ENCODE measurements at regions of chr2 and their contacts with region 1.

Region 1: GRCh38 chr2:171922230-171923022 is at the start of gene HAT1:
- DNase-seq: peak; percentile 97
- H3K4me3 ChIP-seq: peak within 1 kb of the TSS; percentile 79 to 81
- H3K27ac ChIP-seq: peak within 1 kb of the TSS; percentile 95 to 98
- H3K4me1 ChIP-seq: no peaks in the 10 kb centered on the region
- H3K27me3 ChIP-seq: no peaks in the 10 kb centered on the region
- CTCF ChIP-seq: no peak
- POLR2A ChIP-seq: peak; percentile 61
- total RNA-seq, gene HAT1: 30.6 to 41.9 TPM

Region 2: GRCh38 chr2:171893824-171894611 is 28.4 kb before region 1 on chr2 and contains the start of gene SLC25A12:
- intact Hi-C with region 1: loop called (anchors 1 kb)
- DNase-seq: peak; percentile 79
- H3K4me3 ChIP-seq: peak within 1 kb of the TSS; percentile 65 to 79
- H3K27ac ChIP-seq: peak within 1 kb of the TSS; percentile 85 to 88
- H3K4me1 ChIP-seq: no peaks in the 10 kb centered on the region
- H3K27me3 ChIP-seq: no peaks in the 10 kb centered on the region
- CTCF ChIP-seq: peak in 1 of 4 experiments; percentile 23
- POLR2A ChIP-seq: peak; percentile 74
- total RNA-seq, gene SLC25A12: 23.5 to 33.9 TPM